Spleen (tissue), 13 donors: ENCODE measurements at regions of chr9 and their contacts with region 1.

Region 1: GRCh38 chr9:132235946-132236661 is 74.2 kb downstream of the NTNG2 start:
- DNase-seq: peak; percentile 93
- H3K4me3 ChIP-seq: no peak overlapping the region
- H3K27ac ChIP-seq: no peak overlapping the region
- H3K4me1 ChIP-seq: peaks cover 0 to 42% (median 24%) of the 10 kb centered on the region in 6 donors
- H3K27me3 ChIP-seq: peaks cover 0 to 78% (median 10%) of the 10 kb centered on the region in 7 donors
- CTCF ChIP-seq: peak; percentile 67 to 95 (median 93)
- POLR2A ChIP-seq: no peak

Region 2: DNA sequence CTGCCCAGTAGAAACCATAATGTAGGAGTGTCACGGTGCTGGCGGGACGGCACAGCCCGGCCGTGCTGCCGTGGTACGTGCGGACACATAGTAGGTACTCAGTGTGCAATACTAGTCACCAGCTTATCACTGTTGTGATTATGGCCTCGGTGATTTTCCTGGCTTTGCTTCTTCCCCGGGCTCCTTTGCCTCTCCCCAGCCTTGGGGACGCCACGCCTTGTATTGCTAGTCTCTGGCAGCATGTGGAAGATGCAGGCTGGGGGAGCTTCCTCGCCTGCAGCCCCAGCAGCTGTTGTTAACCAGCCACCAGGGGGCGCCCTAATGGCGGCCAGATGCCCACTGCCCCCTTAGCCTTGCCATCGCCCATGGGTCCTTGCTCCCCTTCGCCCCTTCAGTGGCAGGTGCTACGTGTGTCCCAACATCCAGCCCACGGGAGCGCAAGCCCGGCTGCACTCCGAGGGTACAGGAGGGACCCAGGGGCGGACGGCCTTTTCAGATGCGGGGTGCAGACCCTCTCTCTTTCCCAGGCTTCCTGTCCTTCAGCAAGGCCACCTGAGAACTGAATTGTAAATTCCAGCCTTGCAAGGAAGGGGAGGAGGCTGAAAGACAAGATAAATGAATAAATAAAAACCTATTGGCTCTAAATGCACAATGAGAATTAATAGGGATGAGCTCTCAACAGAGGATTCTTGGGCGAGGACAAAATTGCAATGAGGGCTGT is 66.3 kb before region 1 on chr9:
- intact Hi-C with region 1: loop called (anchors 10 kb)
- DNase-seq: peak; percentile 89
- H3K4me3 ChIP-seq: no peak overlapping the region
- H3K27ac ChIP-seq: no peak overlapping the region
- H3K4me1 ChIP-seq: peaks cover 0 to 15% (median under 1%) of the 10 kb centered on the region in 6 donors
- H3K27me3 ChIP-seq: peaks cover 0 to 74% (median 28%) of the 10 kb centered on the region in 7 donors
- CTCF ChIP-seq: peak; percentile 33 to 93 (median 86)
- POLR2A ChIP-seq: no peak